Left cardiac atrium (tissue), 4 donors: ENCODE measurements at regions of chr2 and their contacts with region 1.

Region 1: GRCh38 chr2:11477994-11478393 is 12.0 kb upstream of the E2F6 start:
- DNase-seq: peak; percentile 91
- ATAC-seq: peak; percentile 65 to 70

Region 2: DNA sequence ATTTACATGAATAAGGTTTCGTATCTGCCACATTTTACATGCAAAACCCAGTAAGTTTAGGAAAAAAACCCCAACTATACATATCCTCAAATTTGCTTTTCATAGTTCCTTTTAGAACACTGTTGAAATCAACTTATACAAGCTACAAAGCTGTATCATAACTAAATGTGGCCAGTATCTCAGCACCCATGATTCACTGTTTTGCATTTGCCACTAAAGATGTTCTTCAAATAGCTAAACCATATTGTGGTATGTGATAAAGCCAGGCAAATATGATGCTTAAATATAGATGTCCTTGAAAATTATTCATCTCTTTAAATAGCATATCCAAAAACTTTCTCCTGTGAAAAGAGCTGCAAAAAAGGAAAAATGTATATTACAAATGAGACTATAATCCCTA is 163.5 kb before region 1 on chr2:
- intact Hi-C with region 1: no loop called
- DNase-seq: no peak
- ATAC-seq: no peak

Region 3: DNA sequence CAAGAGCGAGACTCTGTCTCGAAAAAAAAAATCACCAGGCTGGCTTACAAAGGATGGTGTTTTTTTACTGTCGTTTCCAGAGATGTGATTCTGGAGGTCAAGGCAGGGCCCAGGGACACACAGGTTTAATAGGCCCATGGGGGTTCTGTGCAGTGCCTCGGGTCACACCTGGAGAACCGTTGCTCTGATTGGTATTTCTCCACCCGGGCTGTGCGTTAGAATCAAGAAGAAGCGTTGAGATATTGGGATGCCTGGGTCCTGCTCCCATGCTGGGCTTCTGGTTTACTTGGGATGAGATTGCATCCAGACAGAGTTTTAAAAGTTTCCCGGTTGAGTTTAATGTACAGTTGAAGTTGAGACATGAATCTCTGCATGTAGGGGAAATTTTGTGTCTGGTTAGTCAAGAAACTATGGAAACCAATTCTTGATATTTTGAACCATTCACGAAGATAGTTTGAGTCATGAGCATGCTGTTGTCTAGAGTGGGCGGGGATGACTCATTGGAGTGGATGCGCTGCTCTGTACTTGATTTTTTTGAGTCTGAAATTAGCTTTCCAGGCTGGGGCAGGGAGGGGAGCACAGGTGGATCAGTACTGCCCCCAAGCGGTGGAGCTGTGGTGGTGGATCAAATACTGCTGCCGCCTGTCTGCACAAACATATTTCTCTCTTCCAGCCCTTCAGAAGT is 106.0 kb after region 1 on chr2:
- intact Hi-C with region 1: loop called (anchors 1 to 2 kb)
- DNase-seq: peak; percentile 70
- ATAC-seq: peak; percentile 71 to 89

Region 4: DNA sequence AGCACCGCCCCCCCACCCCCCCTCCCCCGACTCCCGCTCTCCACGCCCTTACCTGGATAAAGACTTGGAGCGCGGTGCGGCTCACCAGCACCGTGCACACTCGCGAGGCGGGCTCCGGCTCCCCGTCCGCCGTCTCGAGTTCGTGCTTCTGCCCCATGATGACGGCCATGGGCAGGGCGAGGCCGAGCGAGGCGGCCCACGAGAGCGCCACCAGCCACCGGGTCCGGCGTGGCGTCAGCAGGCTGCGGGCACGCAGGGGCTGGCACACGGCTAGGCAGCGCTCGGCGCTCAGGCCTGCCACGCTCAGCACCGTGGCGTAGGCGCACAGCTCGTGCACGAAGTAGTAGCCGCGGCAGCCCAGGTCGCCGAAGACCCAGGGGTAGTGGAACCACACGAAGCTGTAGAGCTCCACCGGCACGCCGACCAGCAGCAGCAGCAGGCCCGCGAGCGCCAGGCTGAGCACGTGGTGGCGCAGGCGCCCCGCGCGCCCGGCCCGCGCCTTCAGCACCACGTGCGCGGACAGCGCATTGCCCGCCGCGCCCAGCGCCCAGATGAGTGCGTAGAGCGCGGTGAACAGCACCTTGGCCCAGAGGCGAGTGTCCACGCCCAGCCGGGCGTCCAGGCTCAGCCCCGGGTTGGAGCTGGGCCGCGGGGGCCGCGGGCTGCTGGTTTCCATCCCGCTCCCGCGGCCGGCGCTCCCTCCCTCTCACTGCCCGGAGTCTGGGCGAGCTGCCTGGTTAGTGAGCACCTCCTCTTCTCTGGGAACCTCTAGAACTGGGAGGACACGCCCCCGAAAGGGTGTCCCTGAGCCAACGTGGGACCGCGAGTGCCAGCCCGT is 191.7 kb after region 1 on chr2 and contains the start of gene NTSR2:
- intact Hi-C with region 1: loop called in 1 of 2 experiments (anchors 10 kb)
- DNase-seq: peak; percentile 62
- ATAC-seq: peak; percentile 95 to 96
- total RNA-seq, gene NTSR2: 0.24 TPM in 1 of 2 donors, not detected in the other

Region 5: DNA sequence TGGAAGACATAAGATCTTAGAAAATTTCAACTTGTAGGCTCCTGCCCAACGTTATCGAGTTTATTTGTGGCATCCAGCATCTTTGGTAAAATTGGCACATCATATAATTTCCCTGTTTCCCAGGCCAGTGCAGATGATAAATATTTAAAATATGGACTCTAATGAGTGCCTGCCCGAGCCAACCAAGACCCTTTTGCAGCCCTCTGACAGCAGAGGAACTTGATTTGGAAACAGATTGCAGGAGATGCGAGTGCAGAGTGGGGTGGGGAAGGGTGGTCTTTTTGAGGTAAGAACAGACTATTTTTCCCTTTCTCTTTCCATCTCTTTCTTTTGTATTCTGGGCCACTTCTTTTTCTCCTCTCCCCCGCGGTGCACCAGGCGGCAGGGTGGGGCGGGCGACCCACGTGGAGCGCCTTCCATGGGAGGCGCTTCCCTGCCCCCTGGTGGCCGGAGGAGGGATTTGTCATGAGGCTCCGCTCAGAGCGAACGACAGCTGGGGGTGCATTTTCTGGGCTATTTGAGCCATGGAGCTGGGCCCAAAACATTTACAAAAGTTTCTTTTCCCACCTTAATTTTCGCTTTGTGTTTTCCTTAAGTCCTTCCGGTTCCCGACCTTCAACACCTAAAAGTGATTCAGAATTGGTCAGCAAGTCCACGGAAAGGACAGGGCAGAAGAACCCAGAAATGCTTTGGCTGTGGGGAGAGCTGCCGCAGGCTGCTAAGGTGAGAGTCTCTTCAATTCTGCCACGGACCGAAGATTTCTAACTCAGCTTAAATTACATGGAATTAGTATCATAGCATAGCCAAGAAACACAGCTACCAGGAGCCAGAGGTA is 301.1 kb after region 1 on chr2:
- intact Hi-C with region 1: loop called in 1 of 2 experiments (anchors 10 kb)
- DNase-seq: peak; percentile 86
- ATAC-seq: peak; percentile 94 to 96